ENCODE measurements at regions of chr14 and their contacts with region 1.

Region 1: DNA sequence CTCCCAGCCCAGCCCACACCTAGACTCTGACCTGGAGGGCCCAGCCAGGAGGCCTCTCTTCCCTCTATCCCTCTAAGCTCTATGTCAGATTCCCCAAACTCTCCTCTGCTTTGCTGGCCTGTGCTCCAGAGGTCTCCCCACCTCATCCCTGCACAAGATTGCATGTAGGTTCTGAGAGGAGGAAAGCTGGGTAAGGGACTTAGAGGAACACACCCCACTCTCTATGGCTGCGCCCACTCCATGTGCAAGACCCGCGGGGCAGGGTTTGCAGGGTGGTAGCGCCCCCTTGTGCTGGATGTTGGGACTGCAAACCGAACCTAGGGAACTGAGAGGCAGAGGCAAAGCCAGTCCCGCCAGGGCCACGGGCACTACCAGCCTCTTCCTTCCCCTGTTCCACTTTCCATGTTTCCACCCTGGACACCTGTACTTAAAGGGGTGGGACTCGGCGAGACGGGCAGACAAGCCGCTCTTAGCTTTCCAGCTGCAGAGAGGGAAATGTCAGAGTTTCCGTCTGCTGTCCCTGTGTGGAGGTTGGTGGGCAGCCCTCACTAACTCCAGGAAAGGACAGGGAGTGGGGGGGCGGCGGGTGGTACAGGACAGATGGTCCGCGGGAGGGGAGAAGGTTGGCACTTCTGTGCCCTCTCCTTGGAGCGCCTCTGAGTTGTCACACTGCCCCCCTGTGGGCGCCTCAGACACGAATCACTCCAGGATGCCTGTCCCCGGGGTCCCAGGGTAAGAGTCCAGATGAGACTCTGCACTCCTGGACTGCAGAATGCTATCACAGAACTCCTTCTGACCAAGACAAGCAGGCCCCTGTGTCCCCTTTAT is 16.8 kb downstream of the MMP14 start:
- DNase-seq: peak; percentile 89
- H3K4me3 ChIP-seq: peak overlapping the region in 1 of 3 donors; percentile 23
- H3K27ac ChIP-seq: peak overlapping the region; percentile 52 to 83 (median 72)
- H3K4me1 ChIP-seq: peaks cover 5 to 41% of the 10 kb centered on the region in 2 donors
- H3K27me3 ChIP-seq: no peaks in the 10 kb centered on the region
- CTCF ChIP-seq: peak; percentile 73 to 97 (median 90)
- POLR2A ChIP-seq: peak in 1 of 2 donors; percentile 42

Region 2: DNA sequence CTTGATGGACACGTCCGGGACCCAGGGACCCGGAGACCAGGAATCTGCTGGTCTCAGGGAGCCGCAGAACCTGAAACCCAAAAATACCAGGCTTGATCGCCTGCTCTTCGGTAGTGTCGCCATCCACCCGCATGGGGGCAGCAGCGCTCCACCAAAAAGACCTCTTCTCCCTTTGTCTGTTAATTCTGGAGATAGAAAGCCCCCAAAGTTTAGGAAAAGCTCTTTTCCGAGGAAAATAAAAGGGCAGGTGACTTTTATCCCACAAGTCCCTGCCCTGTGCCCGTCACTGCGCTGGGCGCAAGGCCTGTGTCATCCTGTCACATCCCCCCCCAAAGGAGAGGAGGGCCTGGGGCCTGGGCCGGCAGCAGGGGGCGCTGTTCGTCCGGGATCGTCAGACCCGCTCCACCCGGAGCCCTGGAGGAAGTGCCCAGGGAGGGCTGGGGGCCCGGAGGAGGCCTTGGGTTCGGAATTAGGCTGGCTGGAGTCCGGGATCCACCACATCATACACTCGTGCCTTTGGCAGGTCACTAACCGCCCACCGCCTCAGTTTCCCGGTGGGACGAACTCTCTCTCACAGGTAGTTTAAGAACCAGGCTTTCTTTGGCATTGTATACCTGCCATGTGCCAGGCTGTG is 296.0 kb before region 1 on chr14:
- intact Hi-C with region 1: loop called (anchors 5 kb)
- DNase-seq: peak; percentile 75 to 85
- H3K4me3 ChIP-seq: peak overlapping the region in 1 of 3 donors; percentile 12
- H3K27ac ChIP-seq: peak overlapping the region; percentile 22 to 67 (median 29)
- H3K4me1 ChIP-seq: peaks cover 28 to 50% of the 10 kb centered on the region in 2 donors
- H3K27me3 ChIP-seq: no peaks in the 10 kb centered on the region
- CTCF ChIP-seq: peak; percentile 86 to 100 (median 98)
- POLR2A ChIP-seq: no peak

Region 3: DNA sequence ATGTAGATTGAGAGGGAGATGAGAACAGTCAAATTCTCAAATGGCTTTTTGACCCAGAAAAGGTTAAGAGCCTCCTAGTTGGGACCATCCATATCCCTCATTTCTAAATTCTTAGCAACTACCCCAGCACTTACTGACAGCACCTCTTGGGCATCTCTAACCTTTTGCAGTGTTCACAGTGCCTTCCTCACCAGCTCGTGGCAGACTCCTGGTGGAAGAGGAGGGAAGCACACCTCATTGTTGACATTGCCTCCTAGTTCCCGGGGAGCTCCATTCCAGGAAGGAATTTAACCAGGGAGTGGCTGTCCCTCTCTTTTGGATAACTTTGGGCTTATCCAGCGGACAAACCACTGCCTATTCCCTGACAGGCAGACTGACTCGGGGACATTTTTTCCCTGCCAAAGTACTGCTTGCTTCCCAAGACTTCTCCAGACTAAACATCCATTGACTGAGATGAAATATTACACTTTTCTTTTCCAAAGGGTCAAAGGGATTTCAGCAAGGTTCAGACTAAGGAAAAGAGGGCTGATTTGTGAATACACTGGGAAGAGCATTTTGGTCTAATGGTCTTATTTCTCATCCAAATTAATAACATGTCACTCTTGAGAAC is 200.0 kb before region 1 on chr14:
- intact Hi-C with region 1: loop called (anchors 10 kb)
- DNase-seq: peak; percentile 70 to 79
- H3K4me3 ChIP-seq: no peak overlapping the region
- H3K27ac ChIP-seq: no peak overlapping the region
- H3K4me1 ChIP-seq: peaks cover 0 to 4% of the 10 kb centered on the region in 2 donors
- H3K27me3 ChIP-seq: no peaks in the 10 kb centered on the region
- CTCF ChIP-seq: peak; percentile 61 to 90 (median 85)
- POLR2A ChIP-seq: no peak

Region 4: GRCh38 chr14:22822571-22823098 is 30.5 kb before region 1 on chr14:
- intact Hi-C with region 1: loop called (anchors 2 kb)
- DNase-seq: peak; percentile 69 to 73
- H3K4me3 ChIP-seq: peak overlapping the region in 1 of 3 donors; percentile 21
- H3K27ac ChIP-seq: peak overlapping the region; percentile 48 to 83 (median 69)
- H3K4me1 ChIP-seq: peaks cover 29 to 44% of the 10 kb centered on the region in 2 donors
- H3K27me3 ChIP-seq: no peaks in the 10 kb centered on the region
- CTCF ChIP-seq: peak; percentile 48 to 84 (median 74)
- POLR2A ChIP-seq: peak in 1 of 2 donors; percentile 17